GM12878 (cell line): ENCODE measurements at regions of chr5 and their contacts with region 1.

Region 1: GRCh38 chr5:68287976-68288706 is 72.6 kb downstream of the PIK3R1 start:
- DNase-seq: peak; percentile 77
- ATAC-seq: peak; percentile 85
- H3K4me3 ChIP-seq: peak overlapping the region; percentile 77
- H3K27ac ChIP-seq: peak overlapping the region; percentile 94
- H3K4me1 ChIP-seq: peaks cover 53% of the 10 kb centered on the region
- H3K27me3 ChIP-seq: no peaks in the 10 kb centered on the region
- CTCF ChIP-seq: no peak
- EP300 ChIP-seq: peak; percentile 16 to 52; a peak in 1 of 4 replicates
- POLR2A ChIP-seq: peak; percentile 78
- RAD21 ChIP-seq: 0 out of 2 replicates have a peak, but pooled peaks have one; percentile 9

Region 2: DNA sequence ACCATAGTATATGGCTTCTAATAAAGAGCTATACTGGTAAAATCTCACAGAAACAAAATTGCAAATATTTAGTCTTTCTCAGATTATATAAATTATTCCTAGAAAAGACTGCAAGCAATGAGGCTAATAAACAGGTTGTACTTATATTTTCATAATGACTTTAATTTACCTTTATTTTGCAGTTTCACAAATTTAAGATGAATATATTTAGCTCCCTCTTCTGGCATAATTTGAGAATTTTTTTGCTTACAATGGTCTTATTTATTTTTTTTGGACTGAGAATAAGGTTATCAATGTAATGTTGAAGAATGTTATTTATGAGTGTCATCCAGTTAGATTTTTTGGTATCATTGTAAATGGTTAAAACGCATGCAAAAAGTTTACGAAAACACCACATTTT is 15.9 kb before region 1 on chr5:
- CTCF ChIA-PET with region 1: interaction called, 14 read pairs
- POLR2A ChIA-PET with region 1: interaction called, 4 read pairs
- RAD21 ChIA-PET with region 1: interaction called, 23 read pairs
- SMC1A ChIA-PET with region 1: interaction called, 33 read pairs
- in situ Hi-C with region 1: no loop called
- intact Hi-C with region 1: no loop called
- DNase-seq: no peak
- ATAC-seq: no peak
- H3K4me3 ChIP-seq: no peak overlapping the region
- H3K27ac ChIP-seq: no peak overlapping the region
- H3K4me1 ChIP-seq: peaks cover 34% of the 10 kb centered on the region
- H3K27me3 ChIP-seq: no peaks in the 10 kb centered on the region
- CTCF ChIP-seq: peak in 1 of 3 experiments; percentile 11; a peak in 1 of 6 replicates
- EP300 ChIP-seq: no peak
- POLR2A ChIP-seq: no peak
- RAD21 ChIP-seq: no peak

Region 3: GRCh38 chr5:68369457-68370125 is 81.5 kb after region 1 on chr5:
- CTCF ChIA-PET with region 1: interaction called, 17 read pairs
- POLR2A ChIA-PET with region 1: interaction called, 3 read pairs
- RAD21 ChIA-PET with region 1: interaction called, 8 read pairs
- SMC1A ChIA-PET with region 1: interaction called, 33 read pairs
- in situ Hi-C with region 1: no loop called
- intact Hi-C with region 1: no loop called
- DNase-seq: peak; percentile 54
- ATAC-seq: peak; percentile 92
- H3K4me3 ChIP-seq: peak overlapping the region; percentile 19; the same call in 1 of the 2 replicates
- H3K27ac ChIP-seq: peak overlapping the region; percentile 60
- H3K4me1 ChIP-seq: peaks cover 42% of the 10 kb centered on the region
- H3K27me3 ChIP-seq: no peaks in the 10 kb centered on the region
- CTCF ChIP-seq: no peak
- EP300 ChIP-seq: peak; percentile 40 to 80; a peak in 2 of 4 replicates
- POLR2A ChIP-seq: no peak
- RAD21 ChIP-seq: 0 out of 2 replicates have a peak, but pooled peaks have one; percentile 18

Region 4: DNA sequence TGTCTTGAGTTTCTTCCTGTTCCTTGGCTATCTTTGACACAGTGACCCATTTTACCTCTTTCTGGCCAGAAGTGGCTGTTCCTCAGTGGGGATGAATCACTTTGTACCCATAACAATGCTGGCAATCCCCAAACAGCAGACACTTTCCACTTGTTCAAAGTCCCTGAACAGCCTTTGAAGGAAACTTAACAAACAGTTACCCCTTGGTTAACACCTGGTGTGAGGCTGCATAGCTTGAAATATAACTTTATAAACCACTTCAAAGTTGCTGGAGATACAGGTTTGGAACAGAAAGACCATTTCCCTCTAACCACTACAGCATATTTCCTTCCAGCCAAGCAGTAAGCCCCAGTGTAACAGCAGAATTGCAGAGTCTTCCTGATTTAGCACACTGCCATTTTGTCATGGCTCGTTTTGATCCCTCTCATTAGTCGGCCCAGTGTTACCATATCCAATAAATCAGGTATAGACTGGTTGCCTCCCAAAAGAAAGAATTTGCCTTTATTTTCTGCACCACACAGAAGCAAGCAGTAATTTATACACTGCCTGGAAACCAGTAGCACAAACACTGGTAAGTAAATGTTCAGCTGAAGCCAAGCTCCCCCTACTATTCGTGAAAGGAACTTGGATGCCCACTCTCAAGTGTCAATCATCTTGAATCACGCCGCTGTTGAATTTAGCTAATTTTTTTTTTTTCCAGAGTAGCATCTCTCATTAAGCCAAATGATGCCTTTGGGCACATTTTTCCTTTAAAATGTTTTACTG is 153.3 kb after region 1 on chr5:
- CTCF ChIA-PET with region 1: interaction called, 63 read pairs
- POLR2A ChIA-PET with region 1: interaction called, 28 read pairs
- RAD21 ChIA-PET with region 1: interaction called, 185 read pairs
- SMC1A ChIA-PET with region 1: interaction called, 137 read pairs
- in situ Hi-C with region 1: no loop called
- intact Hi-C with region 1: no loop called
- DNase-seq: no peak
- ATAC-seq: peak; percentile 77
- H3K4me3 ChIP-seq: no peak overlapping the region
- H3K27ac ChIP-seq: peak overlapping the region; percentile 31; the same call in 1 of the 2 replicates
- H3K4me1 ChIP-seq: peaks cover 28% of the 10 kb centered on the region
- H3K27me3 ChIP-seq: no peaks in the 10 kb centered on the region
- CTCF ChIP-seq: no peak
- EP300 ChIP-seq: peak in 1 of 2 experiments; percentile 64; a peak in 2 of 4 replicates
- POLR2A ChIP-seq: no peak
- RAD21 ChIP-seq: no peak

Region 5: GRCh38 chr5:68484307-68485068 is 196.3 kb after region 1 on chr5:
- CTCF ChIA-PET with region 1: interaction called, 11 read pairs
- POLR2A ChIA-PET with region 1: no interaction called
- RAD21 ChIA-PET with region 1: interaction called, 20 read pairs
- SMC1A ChIA-PET with region 1: interaction called, 8 read pairs
- in situ Hi-C with region 1: no loop called
- intact Hi-C with region 1: no loop called
- DNase-seq: no peak
- ATAC-seq: peak; percentile 45; the same call in 2 of the 3 replicates
- H3K4me3 ChIP-seq: no peak overlapping the region
- H3K27ac ChIP-seq: no peak overlapping the region
- H3K4me1 ChIP-seq: peaks cover 4% of the 10 kb centered on the region; the same call in 1 of the 2 replicates
- H3K27me3 ChIP-seq: no peaks in the 10 kb centered on the region
- CTCF ChIP-seq: no peak
- EP300 ChIP-seq: no peak
- POLR2A ChIP-seq: no peak
- RAD21 ChIP-seq: no peak

Region 6: DNA sequence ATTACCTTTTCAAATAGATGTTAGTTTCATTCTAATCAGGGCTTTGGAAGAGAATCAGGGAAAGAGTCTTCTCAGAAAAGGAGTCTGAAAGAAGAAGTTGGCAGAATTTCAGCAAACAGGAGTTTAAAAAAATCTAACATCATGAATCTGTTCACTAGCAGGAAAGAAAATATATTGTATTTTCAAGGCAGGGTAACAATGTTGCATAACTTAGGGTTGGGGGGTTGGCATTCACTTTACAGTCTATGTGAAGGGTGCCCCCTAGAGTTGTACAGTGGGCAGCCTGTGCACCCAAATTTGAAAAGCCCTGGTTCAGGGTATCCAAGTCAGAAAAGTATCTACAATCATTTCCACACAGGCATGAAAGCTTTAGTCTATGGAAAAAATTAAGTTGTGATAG is 457.3 kb after region 1 on chr5:
- CTCF ChIA-PET with region 1: interaction called, 11 read pairs
- POLR2A ChIA-PET with region 1: no interaction called
- RAD21 ChIA-PET with region 1: no interaction called
- SMC1A ChIA-PET with region 1: interaction called, 9 read pairs
- in situ Hi-C with region 1: no loop called
- intact Hi-C with region 1: no loop called
- DNase-seq: no peak
- ATAC-seq: peak; percentile 49; the same call in 1 of the 3 replicates
- H3K4me3 ChIP-seq: no peak overlapping the region
- H3K27ac ChIP-seq: no peak overlapping the region
- H3K4me1 ChIP-seq: 0 out of 2 replicates have a peak, but pooled peaks cover 3% of the 10 kb centered on the region
- H3K27me3 ChIP-seq: no peaks in the 10 kb centered on the region; a peak in 1 of 4 replicates
- CTCF ChIP-seq: peak; percentile 32 to 40 (median 38); a peak in 4 of 6 replicates
- EP300 ChIP-seq: no peak
- POLR2A ChIP-seq: no peak
- RAD21 ChIP-seq: peak; percentile 36; the same call in 1 of the 2 replicates